ENCODE measurements at regions of chr2 and their contacts with region 1.

Region 1: GRCh38 chr2:101387151-101387807 is at the start of gene CREG2:
- DNase-seq: peak; percentile 60
- H3K4me3 Mint-ChIP-seq: peak within 1 kb of the TSS; percentile 61
- H3K27ac Mint-ChIP-seq: no peak within 1 kb of the TSS
- H3K4me1 Mint-ChIP-seq: peaks cover 11% of the 10 kb centered on the region
- H3K27me3 Mint-ChIP-seq: peaks cover 41% of the 10 kb centered on the region
- total RNA-seq, gene CREG2: not detected

Region 2: GRCh38 chr2:101238930-101239759 is 148.1 kb before region 1 on chr2:
- CTCF ChIA-PET with region 1: no interaction called
- intact Hi-C with region 1: loop called (anchors 1 kb)
- DNase-seq: no peak
- H3K4me3 Mint-ChIP-seq: no peak overlapping the region
- H3K27ac Mint-ChIP-seq: peak overlapping the region; percentile 28
- H3K4me1 Mint-ChIP-seq: no peaks in the 10 kb centered on the region
- H3K27me3 Mint-ChIP-seq: no peaks in the 10 kb centered on the region

Region 3: DNA sequence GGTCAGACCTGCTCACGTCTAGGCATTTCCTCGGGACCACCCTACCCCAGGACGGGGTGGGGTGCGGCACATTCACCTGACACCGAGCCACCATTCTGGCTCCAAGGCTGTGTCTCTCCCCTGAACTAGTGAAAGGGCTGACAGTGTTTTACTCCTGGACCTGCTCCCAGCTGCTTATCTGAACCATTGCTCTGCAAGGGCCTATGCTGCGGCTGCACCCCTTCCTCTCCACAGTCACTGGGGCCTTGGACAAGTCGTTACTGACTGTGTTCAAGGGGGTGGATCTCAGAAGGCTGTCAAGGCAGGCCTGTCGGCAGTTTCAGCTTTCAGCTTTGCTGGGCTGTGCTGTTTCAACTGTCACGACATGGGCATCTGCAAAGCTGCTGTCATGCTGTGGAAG is 11.6 kb before region 1 on chr2:
- CTCF ChIA-PET with region 1: interaction called, 10 read pairs
- intact Hi-C with region 1: no loop called
- DNase-seq: no peak
- H3K4me3 Mint-ChIP-seq: no peak overlapping the region
- H3K27ac Mint-ChIP-seq: no peak overlapping the region
- H3K4me1 Mint-ChIP-seq: peaks cover 10% of the 10 kb centered on the region
- H3K27me3 Mint-ChIP-seq: no peaks in the 10 kb centered on the region

Measured in activated naive CD4-positive, alpha-beta T cell treated with anti-CD3 and anti-CD28 coated beads for 36 hours (primary cell).